ENCODE measurements at regions of chr16 and their contacts with region 1.

Region 1: DNA sequence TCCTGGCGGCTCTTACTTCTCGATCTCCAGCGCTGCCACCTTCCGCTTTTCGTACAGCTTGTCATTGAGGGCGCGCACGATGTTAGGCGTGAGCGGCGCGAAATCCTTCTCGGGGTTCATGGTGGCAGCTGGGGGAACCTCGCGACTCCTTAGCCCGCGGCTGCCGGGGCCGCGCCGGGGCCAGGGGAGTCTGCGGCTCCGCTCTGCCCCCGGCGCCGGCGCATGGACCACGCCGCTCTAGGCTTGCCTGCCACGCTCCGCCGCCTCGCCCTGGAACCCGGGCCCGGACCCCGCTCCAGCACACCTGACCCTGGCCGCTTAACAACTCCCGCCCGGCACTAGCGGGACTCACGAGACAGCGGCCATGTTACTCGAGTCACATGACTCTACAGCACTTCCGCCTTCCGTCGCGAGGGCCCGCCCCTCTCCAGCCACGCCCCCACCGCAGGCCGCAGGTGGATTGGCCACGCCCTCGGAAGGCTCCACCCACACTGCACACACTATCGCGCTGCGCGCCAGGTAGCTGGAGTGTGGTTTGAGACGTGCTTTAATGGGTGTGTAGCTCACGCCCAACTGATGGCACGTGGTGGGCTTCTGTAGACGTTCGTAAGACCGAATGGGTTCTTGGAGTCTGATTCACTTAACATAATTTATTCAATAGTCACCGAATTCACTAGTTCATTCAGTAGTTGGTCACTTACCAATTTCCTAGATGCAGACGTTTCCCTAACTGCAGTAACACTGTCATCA is at the start of gene VAC14:
- DNase-seq: peak; percentile 95 to 99 (median 98)
- ATAC-seq: peak; percentile 98
- H3K4me3 ChIP-seq: peak within 1 kb of the TSS; percentile 85
- H3K4me3 Mint-ChIP-seq: peak within 1 kb of the TSS; percentile 95
- H3K27ac ChIP-seq: peak within 1 kb of the TSS; percentile 53 to 61
- H3K27ac Mint-ChIP-seq: peak within 1 kb of the TSS; percentile 90
- H3K4me1 ChIP-seq: peaks cover 17% of the 10 kb centered on the region
- H3K4me1 Mint-ChIP-seq: peaks cover 35% of the 10 kb centered on the region
- H3K27me3 ChIP-seq: no peaks in the 10 kb centered on the region
- H3K27me3 Mint-ChIP-seq: no peaks in the 10 kb centered on the region
- CTCF ChIP-seq: no peak
- total RNA-seq, gene VAC14: 23.0 to 23.6 TPM

Region 2: GRCh38 chr16:70715055-70715858 is 85.7 kb before region 1 on chr16:
- CTCF ChIA-PET with region 1: no interaction called
- POLR2A ChIA-PET with region 1: no interaction called
- intact Hi-C with region 1: no loop called
- DNase-seq: no peak
- ATAC-seq: no peak
- H3K4me3 ChIP-seq: no peak overlapping the region
- H3K4me3 Mint-ChIP-seq: no peak overlapping the region
- H3K27ac ChIP-seq: no peak overlapping the region
- H3K27ac Mint-ChIP-seq: no peak overlapping the region
- H3K4me1 ChIP-seq: no peaks in the 10 kb centered on the region
- H3K4me1 Mint-ChIP-seq: peaks cover 4% of the 10 kb centered on the region
- H3K27me3 ChIP-seq: no peaks in the 10 kb centered on the region
- H3K27me3 Mint-ChIP-seq: no peaks in the 10 kb centered on the region
- CTCF ChIP-seq: no peak

Region 3: DNA sequence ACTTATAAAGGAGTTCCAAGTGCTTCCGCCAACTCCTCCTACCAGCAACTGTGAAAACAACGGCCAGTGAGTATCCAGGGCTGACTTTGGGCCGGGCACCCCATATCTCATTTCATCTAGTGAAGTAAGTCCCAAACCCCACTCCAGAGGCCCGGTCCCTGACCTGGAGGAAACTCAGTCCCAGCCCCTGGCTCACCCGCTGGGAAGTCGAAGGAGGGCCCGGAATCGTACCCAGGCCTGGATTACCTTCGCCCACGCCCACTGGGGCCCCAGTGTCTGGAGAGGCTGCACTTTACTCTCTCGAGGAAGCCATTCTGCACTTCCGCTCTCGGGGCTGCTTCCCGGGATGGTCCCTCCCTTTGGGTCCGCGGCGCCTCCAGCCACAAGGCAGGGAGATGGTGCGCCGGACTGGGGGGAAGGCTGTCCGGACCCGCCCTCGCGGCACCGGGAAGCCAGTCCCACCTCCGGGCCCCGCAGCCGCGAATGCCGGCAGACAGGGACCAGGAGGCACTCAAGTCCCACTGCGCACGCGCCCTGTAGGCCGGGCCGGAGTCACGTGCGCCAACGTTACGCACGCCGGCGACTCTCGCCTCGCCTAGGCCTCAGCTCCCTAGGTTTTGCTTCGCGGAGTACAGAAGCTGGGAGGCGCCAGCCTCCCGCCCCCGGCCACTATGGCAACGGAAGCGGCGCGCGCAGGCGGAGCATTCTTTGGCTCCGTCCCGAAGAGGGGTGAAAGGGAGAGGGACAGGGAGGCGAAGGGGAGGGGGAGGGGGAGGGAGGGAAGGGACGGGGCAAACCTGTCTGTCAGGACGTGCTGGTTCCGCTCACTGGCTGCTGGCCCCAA is 488.2 kb after region 1 on chr16 and contains the start of gene CMTR2:
- CTCF ChIA-PET with region 1: no interaction called
- POLR2A ChIA-PET with region 1: no interaction called
- intact Hi-C with region 1: loop called in 1 of 2 experiments (anchors 5 kb)
- DNase-seq: peak; percentile 71 to 95 (median 83)
- ATAC-seq: peak; percentile 92
- H3K4me3 ChIP-seq: peak within 1 kb of the TSS; percentile 94
- H3K4me3 Mint-ChIP-seq: peak within 1 kb of the TSS; percentile 91
- H3K27ac ChIP-seq: peak within 1 kb of the TSS; percentile 80 to 90
- H3K27ac Mint-ChIP-seq: peak within 1 kb of the TSS; percentile 81
- H3K4me1 ChIP-seq: peaks cover 19% of the 10 kb centered on the region
- H3K4me1 Mint-ChIP-seq: peaks cover 31% of the 10 kb centered on the region
- H3K27me3 ChIP-seq: peaks cover 5 to 17% of the 10 kb centered on the region in 2 experiments
- H3K27me3 Mint-ChIP-seq: peaks cover 26% of the 10 kb centered on the region
- CTCF ChIP-seq: no peak
- total RNA-seq, gene CMTR2: 5.9 to 6.6 TPM

Region 4: GRCh38 chr16:71484006-71484893 is 683.3 kb after region 1 on chr16:
- CTCF ChIA-PET with region 1: no interaction called
- POLR2A ChIA-PET with region 1: no interaction called
- intact Hi-C with region 1: loop called in 1 of 2 experiments (anchors 5 kb)
- DNase-seq: peak; percentile 64 to 95 (median 76)
- ATAC-seq: peak; percentile 84
- H3K4me3 ChIP-seq: peak overlapping the region; percentile 94
- H3K4me3 Mint-ChIP-seq: peak overlapping the region; percentile 85
- H3K27ac ChIP-seq: peak overlapping the region; percentile 93 to 99
- H3K27ac Mint-ChIP-seq: peak overlapping the region; percentile 89
- H3K4me1 ChIP-seq: peaks cover 14% of the 10 kb centered on the region
- H3K4me1 Mint-ChIP-seq: peaks cover 15% of the 10 kb centered on the region
- H3K27me3 ChIP-seq: no peaks in the 10 kb centered on the region
- H3K27me3 Mint-ChIP-seq: no peaks in the 10 kb centered on the region
- CTCF ChIP-seq: no peak

Measured in CD4-positive, alpha-beta T cell (primary cell).